Activated CD4-positive, alpha-beta T cell treated with anti-CD3 and anti-CD28 coated beads, Interleukin-2, amount 10 ng/mL, durations not matched to agents 24 days and 14 days (primary cell): ENCODE measurements at regions of chr17 and their contacts with region 1.

Region 1: GRCh38 chr17:5438716-5439445 is at the start of gene C1QBP:
- DNase-seq: peak; percentile 98
- H3K4me3 Mint-ChIP-seq: peak within 1 kb of the TSS; percentile 94
- H3K27ac Mint-ChIP-seq: peak within 1 kb of the TSS; percentile 88
- H3K4me1 Mint-ChIP-seq: peaks cover 34% of the 10 kb centered on the region
- H3K27me3 Mint-ChIP-seq: no peaks in the 10 kb centered on the region
- total RNA-seq, gene C1QBP: 451 TPM in 2 replicates

Region 2: DNA sequence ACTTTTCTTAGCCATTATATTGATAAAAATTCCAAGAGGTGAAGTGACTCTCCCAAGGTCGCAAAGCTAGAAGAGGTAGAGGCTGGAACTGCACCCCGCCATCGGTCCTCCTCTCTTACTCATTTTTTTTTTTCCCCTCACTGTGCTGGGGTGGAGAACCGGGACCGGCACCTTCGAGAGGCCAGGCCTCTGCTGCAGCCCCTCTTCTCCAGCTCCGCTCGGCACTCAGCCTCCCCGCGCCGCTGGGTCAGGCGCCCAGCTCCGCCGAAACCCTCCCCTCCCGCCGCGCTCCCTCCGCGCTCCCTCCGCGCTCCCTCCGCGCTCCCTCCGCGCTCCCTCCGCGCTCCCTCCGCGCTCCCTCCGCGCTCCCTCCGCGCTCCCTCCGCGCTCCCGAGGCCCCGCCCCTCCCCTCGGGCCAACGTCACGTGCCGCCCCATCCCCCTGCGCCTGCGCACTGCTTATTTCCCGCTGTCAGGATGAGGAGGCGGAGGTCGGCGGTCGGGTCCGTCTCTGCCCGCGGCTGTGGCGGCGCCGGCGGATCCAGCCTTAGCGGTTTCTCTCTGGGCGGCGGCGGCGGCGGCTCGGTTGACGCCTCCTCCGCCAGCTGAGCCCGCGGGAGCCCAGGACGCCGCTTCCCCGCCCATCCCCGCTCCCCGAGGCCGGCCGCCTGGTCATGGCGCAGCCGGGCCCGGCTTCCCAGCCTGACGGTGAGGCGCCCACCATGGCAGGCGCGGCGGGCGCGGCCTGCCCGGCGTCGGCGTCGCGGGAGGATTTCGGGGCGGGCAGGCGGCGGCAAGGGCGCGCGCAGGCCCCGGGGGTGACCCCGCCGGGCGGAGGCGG is 156.8 kb before region 1 on chr17 and contains the start of gene RABEP1:
- intact Hi-C with region 1: loop called (anchors 10 kb)
- DNase-seq: peak; percentile 98
- H3K4me3 Mint-ChIP-seq: peak within 1 kb of the TSS; percentile 91
- H3K27ac Mint-ChIP-seq: peak within 1 kb of the TSS; percentile 94
- H3K4me1 Mint-ChIP-seq: peaks cover 23% of the 10 kb centered on the region
- H3K27me3 Mint-ChIP-seq: peaks cover 2% of the 10 kb centered on the region
- total RNA-seq, gene RABEP1: 57.3 and 58.2 TPM in 2 replicates

Region 3: DNA sequence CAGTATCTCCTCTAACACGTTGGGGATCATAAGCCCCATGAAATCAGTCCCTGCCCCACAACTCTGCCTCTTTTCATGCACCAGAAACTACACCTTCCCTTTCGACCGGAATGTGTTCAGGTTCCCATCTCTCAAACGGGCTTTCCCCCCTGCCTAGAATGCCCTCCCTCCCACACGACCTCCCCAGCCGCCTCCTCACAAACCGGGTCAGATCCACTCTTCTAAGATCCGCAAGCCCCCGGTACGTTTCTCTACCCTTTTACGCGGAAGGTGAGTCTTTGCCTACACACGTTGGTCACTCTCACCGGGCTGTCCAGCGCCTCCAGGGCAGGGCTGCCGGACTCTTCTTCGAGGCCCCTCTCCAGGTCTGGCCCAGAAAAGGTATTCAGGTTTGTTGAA is 29.2 kb after region 1 on chr17:
- intact Hi-C with region 1: loop called (anchors 1 kb)
- DNase-seq: peak; percentile 74
- H3K4me3 Mint-ChIP-seq: peak overlapping the region; percentile 99
- H3K27ac Mint-ChIP-seq: peak overlapping the region; percentile 82
- H3K4me1 Mint-ChIP-seq: peaks cover 37% of the 10 kb centered on the region
- H3K27me3 Mint-ChIP-seq: no peaks in the 10 kb centered on the region